ENCODE measurements at regions of chr4 and their contacts with region 1.

Region 1: GRCh38 chr4:8468746-8469535 is 28.4 kb downstream of the TRMT44 start:
- DNase-seq: no peak
- H3K4me3 ChIP-seq: no peak overlapping the region
- H3K27ac ChIP-seq: no peak overlapping the region
- H3K4me1 ChIP-seq: peaks cover 8 to 19% of the 10 kb centered on the region in 2 donors
- H3K27me3 ChIP-seq: no peaks in the 10 kb centered on the region
- CTCF ChIP-seq: peak; percentile 63 to 93 (median 92)

Region 2: GRCh38 chr4:8506373-8507188 is 37.6 kb after region 1 on chr4:
- intact Hi-C with region 1: loop called (anchors 2 kb)
- DNase-seq: peak; percentile 37 to 85
- H3K4me3 ChIP-seq: peak overlapping the region; percentile 22 to 32
- H3K27ac ChIP-seq: peak overlapping the region; percentile 72 to 86
- H3K4me1 ChIP-seq: peaks cover 10 to 35% of the 10 kb centered on the region in 2 donors
- H3K27me3 ChIP-seq: no peaks in the 10 kb centered on the region
- CTCF ChIP-seq: no peak

Region 3: DNA sequence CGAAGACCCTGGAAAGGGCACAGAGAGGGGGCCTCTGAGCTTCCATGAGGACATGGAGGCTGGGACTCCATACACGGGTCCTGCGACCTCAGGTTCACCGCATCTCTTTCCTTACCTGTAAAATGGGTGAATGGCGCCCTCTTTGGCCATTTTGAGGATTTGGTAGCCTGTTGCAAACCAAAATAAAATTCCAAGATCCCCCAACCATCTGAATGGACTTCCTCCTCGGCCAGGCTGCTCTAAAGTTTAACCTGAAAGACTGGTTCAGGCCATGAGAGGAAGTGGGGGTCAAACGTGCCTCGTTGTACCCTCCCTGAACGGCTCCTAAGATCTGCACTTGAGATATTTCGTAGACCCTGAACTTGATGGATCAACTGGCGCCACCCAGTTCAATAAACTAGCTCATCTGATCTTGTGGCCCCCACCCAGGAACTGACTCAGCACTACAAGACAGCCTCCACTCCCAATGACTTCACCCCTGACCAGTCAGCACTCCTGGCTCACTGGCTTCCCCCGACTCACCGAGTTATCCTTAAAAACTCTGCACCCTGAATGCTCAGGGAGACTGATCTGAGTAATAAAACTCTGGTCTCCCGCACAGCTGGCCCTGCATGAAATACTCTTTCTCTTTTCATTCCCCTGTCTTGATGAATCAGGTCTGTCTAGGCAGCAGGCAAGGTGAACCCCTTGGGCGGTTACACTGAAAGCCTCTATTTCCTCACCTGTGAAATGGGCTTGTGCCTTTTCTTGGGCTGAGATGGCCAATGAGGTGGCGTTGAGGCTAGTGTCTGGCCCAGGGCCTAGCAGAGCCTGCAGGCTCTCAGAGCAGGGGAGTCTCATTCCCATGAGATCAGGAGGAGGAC is 78.4 kb after region 1 on chr4:
- intact Hi-C with region 1: loop called (anchors 2 kb)
- DNase-seq: no peak
- H3K4me3 ChIP-seq: no peak overlapping the region
- H3K27ac ChIP-seq: no peak overlapping the region
- H3K4me1 ChIP-seq: no peaks in the 10 kb centered on the region
- H3K27me3 ChIP-seq: no peaks in the 10 kb centered on the region
- CTCF ChIP-seq: peak in 1 of 3 experiments; percentile 26

Region 4: GRCh38 chr4:8594097-8595038 is 125.4 kb after region 1 on chr4:
- intact Hi-C with region 1: loop called (anchors 1 kb)
- DNase-seq: no peak
- H3K4me3 ChIP-seq: no peak overlapping the region
- H3K27ac ChIP-seq: no peak overlapping the region
- H3K4me1 ChIP-seq: peaks cover 0 to 3% of the 10 kb centered on the region in 2 donors
- H3K27me3 ChIP-seq: peaks cover 8% of the 10 kb centered on the region
- CTCF ChIP-seq: peak; percentile 51 to 73 (median 51)

Measured in ascending aorta (tissue), 2 donors.